ENCODE measurements at regions of chr6 and their contacts with region 1.

Region 1: GRCh38 chr6:35703554-35703953 is 14.8 kb upstream of the FKBP5 start:
- DNase-seq: no peak
- H3K4me3 ChIP-seq: no peak overlapping the region
- H3K27ac ChIP-seq: no peak overlapping the region
- H3K4me1 ChIP-seq: no peaks in the 10 kb centered on the region
- H3K27me3 ChIP-seq: no peaks in the 10 kb centered on the region
- CTCF ChIP-seq: no peak

Region 2: DNA sequence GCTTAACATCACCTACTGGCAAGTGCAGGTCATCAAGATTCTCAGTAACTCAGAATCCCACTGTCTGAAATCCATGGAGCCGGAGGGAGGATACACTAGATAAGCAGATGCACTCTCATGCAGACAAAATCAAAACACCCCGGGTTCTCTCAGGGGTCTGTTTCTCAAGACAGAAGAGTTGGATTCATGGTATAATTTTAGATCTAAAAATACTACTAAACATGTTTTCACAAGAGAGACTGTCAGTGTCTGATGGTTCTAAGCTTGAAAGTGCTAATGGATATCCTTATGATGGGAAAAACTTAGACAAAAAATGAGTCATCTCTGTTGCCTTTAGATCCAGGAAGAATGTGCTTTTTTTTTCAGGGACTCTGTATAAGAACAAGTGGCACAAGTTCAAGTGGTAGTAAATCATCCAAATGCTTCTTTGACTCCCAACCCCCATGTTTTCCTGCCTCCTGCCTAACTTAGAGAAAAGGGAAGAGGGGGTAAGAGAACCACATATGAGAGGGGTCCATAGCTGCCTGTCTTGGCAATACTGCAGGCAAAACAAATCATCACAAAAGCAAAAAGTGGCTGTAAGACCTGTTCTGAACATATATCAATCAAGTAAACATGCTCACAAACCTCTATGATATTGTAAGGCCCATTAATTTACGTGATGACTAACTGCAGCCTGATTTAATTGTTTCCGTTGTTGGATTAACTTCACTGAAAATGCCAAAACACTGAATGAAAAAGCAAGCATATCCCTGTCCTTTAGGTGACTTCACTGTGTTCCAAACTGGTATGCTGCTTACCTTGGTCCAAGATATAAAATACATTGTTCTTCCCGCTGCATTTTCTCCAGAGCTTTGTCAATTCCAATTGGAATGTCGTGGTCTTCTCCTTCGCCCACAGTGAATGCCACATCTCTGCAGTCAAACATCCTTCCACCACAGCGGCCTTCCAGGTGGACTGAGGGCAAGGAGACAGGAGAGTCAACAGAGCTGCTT is 106.8 kb before region 1 on chr6:
- dilution Hi-C with region 1: loop called (anchors 5 kb)
- DNase-seq: no peak
- H3K4me3 ChIP-seq: no peak overlapping the region
- H3K27ac ChIP-seq: peak overlapping the region; percentile 58
- H3K4me1 ChIP-seq: peaks cover 41% of the 10 kb centered on the region
- H3K27me3 ChIP-seq: no peaks in the 10 kb centered on the region
- CTCF ChIP-seq: no peak

Measured in keratinocyte (primary cell).